H1 (cell line): ENCODE measurements at regions of chr5 and their contacts with region 1.

Region 1: GRCh38 chr5:150129813-150130492 is 25.7 kb downstream of the PDGFRB start:
- DNase-seq: peak in 1 of 2 experiments; percentile 87
- H3K4me3 ChIP-seq: no peak overlapping the region
- H3K27ac ChIP-seq: no peak overlapping the region
- H3K4me1 ChIP-seq: peaks cover 5 to 12% (median 6%) of the 10 kb centered on the region in 4 experiments; a peak in 6 of 7 replicates
- H3K27me3 ChIP-seq: peaks cover 0 to 5% (median 3%) of the 10 kb centered on the region in 4 experiments; a peak in 3 of 7 replicates
- CTCF ChIP-seq: peak in 2 of 3 experiments; percentile 88 to 95; a peak in 3 of 4 replicates
- EP300 ChIP-seq: no peak
- POLR2A ChIP-seq: no peak
- RAD21 ChIP-seq: peak; percentile 92 to 93

Region 2: GRCh38 chr5:149455889-149456409 is 674.0 kb before region 1 on chr5:
- CTCF ChIA-PET with region 1: no interaction called
- POLR2A ChIA-PET with region 1: no interaction called
- DNase-seq: no peak
- H3K4me3 ChIP-seq: no peak overlapping the region
- H3K27ac ChIP-seq: no peak overlapping the region
- H3K4me1 ChIP-seq: peaks cover 0 to 10% (median 3%) of the 10 kb centered on the region in 4 experiments; a peak in 4 of 7 replicates
- H3K27me3 ChIP-seq: no peaks in the 10 kb centered on the region
- CTCF ChIP-seq: no peak
- EP300 ChIP-seq: no peak
- POLR2A ChIP-seq: no peak
- RAD21 ChIP-seq: no peak

Region 3: GRCh38 chr5:150106674-150107426 is 23.1 kb before region 1 on chr5:
- CTCF ChIA-PET with region 1: interaction called, 10 read pairs
- POLR2A ChIA-PET with region 1: no interaction called
- DNase-seq: no peak
- H3K4me3 ChIP-seq: no peak overlapping the region
- H3K27ac ChIP-seq: no peak overlapping the region
- H3K4me1 ChIP-seq: no peaks in the 10 kb centered on the region
- H3K27me3 ChIP-seq: no peaks in the 10 kb centered on the region
- CTCF ChIP-seq: no peak
- EP300 ChIP-seq: no peak
- POLR2A ChIP-seq: no peak
- RAD21 ChIP-seq: no peak

Region 4: GRCh38 chr5:150143350-150144245 is 13.6 kb after region 1 on chr5:
- CTCF ChIA-PET with region 1: interaction called, 188 read pairs
- POLR2A ChIA-PET with region 1: no interaction called
- DNase-seq: no peak
- H3K4me3 ChIP-seq: no peak overlapping the region
- H3K27ac ChIP-seq: no peak overlapping the region
- H3K4me1 ChIP-seq: peaks cover 4 to 23% (median 16%) of the 10 kb centered on the region in 4 experiments
- H3K27me3 ChIP-seq: no peaks in the 10 kb centered on the region; a peak in 1 of 7 replicates
- CTCF ChIP-seq: no peak
- EP300 ChIP-seq: no peak
- POLR2A ChIP-seq: no peak
- RAD21 ChIP-seq: no peak

Region 5: GRCh38 chr5:150161242-150162141 is 31.5 kb after region 1 on chr5:
- CTCF ChIA-PET with region 1: interaction called, 25 read pairs
- POLR2A ChIA-PET with region 1: no interaction called
- DNase-seq: peak in 1 of 2 experiments; percentile 100
- H3K4me3 ChIP-seq: peak overlapping the region in 1 of 4 experiments; percentile 10; a peak in 1 of 8 replicates
- H3K27ac ChIP-seq: no peak overlapping the region
- H3K4me1 ChIP-seq: peaks cover 3 to 10% (median 6%) of the 10 kb centered on the region in 4 experiments
- H3K27me3 ChIP-seq: peaks cover 21 to 31% (median 26%) of the 10 kb centered on the region in 4 experiments
- CTCF ChIP-seq: peak in 2 of 3 experiments; percentile 92 to 99; a peak in 3 of 4 replicates
- EP300 ChIP-seq: no peak
- POLR2A ChIP-seq: no peak
- RAD21 ChIP-seq: peak; percentile 90 to 93

Region 6: GRCh38 chr5:150217873-150218692 is 88.1 kb after region 1 on chr5:
- CTCF ChIA-PET with region 1: interaction called, 69 read pairs
- POLR2A ChIA-PET with region 1: no interaction called
- DNase-seq: peak; percentile 61 to 92
- H3K4me3 ChIP-seq: no peak overlapping the region
- H3K27ac ChIP-seq: no peak overlapping the region
- H3K4me1 ChIP-seq: 0 out of 7 replicates have a peak, but pooled peaks cover 0 to 3% (median 0%) of the 10 kb centered on the region in 4 experiments
- H3K27me3 ChIP-seq: peaks cover 0 to 6% (median 4%) of the 10 kb centered on the region in 4 experiments; a peak in 3 of 7 replicates
- CTCF ChIP-seq: peak in 2 of 3 experiments; percentile 89 to 95; a peak in 3 of 4 replicates
- EP300 ChIP-seq: no peak
- POLR2A ChIP-seq: no peak
- RAD21 ChIP-seq: peak; percentile 97 to 98